ENCODE measurements at regions of chr17 and their contacts with region 1.

Region 1: GRCh38 chr17:15502369-15503112 is 35.1 kb upstream of the CDRT4 start:
- DNase-seq: peak; percentile 98

Region 2: DNA sequence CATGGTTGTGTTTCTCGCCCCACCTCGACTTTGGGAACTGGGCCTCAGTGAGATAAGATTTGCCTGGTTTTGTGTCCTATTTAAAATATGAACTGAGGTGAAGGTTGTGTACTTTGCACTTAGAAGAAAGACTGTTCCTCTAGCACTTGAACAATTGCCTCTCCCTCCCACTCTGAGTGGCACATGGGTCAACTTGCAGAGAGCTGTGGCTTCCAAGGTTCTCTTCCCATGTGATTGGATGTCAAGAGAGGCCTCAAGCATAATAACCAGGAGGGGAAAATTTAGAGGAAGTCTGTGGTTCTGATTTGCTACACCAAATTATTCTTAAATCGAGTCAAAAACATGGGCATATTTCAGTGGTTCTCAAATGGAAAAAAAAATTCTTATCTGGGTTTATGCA is 872.5 kb before region 1 on chr17:
- intact Hi-C with region 1: no loop called
- DNase-seq: no peak

Region 3: DNA sequence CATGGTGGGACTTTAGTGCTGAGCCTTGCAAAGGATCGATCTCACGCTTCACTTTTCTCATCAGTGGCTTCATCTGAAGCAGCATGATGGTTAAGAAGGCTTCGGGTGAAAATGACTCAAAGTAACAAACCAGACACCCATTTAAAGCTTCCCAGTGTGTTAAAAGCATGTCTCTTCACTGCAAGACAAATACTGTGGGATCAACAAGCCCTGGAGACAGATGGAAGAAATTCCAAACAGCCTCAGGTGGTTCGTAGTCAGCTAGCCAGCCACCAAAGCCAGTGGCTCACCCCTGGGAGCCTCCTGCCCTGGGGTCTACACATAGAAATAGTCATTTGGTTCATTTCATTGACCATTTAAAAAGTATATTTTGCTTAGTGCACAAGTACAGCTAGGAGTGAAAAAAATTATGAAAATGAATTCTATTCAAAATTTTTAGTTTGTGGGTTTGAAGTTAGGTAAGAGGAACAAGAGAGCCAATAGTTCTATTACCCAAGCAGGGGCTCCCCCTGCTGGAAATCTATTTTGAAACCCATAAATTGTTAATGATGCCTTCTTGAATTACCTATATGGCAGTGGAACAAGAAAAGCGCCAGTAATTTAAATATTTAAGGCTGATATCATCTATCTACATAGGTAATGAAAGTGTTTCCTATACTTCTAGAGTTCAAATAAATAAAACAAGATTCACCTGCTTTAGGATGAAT is 289.0 kb before region 1 on chr17:
- intact Hi-C with region 1: no loop called
- DNase-seq: no peak

Region 4: DNA sequence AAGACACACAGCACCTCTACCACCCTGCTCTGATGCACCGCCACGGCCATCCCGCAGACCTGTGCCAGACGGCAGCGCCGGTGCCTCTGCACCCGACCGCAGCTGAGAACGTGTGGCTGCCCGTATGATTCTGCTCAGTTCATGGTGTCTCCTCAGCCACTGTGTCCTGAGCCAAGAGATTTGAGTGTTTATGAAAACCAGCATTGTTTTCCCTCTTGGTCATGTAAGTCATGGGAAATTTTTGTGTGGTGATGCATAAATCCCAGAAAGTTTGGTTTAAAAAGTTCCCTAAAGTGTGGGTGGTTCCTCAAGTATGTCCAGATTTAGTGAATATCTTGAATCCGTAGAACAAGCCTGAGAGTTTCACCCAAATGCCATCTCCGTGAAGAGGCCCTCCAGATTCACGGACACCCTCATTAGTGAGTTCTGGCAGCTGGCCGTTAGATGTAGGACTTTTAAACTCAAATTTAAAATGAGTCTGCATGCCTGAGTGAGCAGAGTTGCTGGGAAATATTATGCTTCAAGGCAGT is 92.8 kb before region 1 on chr17:
- intact Hi-C with region 1: loop called in 1 of 2 experiments (anchors 10 kb)
- DNase-seq: no peak

Region 5: GRCh38 chr17:15456972-15457722 is 45.4 kb before region 1 on chr17:
- intact Hi-C with region 1: no loop called
- DNase-seq: no peak